ENCODE measurements at regions of chr16 and their contacts with region 1.

Region 1: GRCh38 chr16:68528686-68529379 is 10.3 kb upstream of the ZFP90 start:
- DNase-seq: peak; percentile 79 to 93 (median 88)
- ATAC-seq: peak; percentile 72 to 80
- H3K4me3 Mint-ChIP-seq: peak overlapping the region; percentile 68 to 94 (median 88)
- H3K27ac Mint-ChIP-seq: peak overlapping the region; percentile 54 to 96 (median 85)
- H3K4me1 Mint-ChIP-seq: peaks cover 14 to 23% (median 20%) of the 10 kb centered on the region in 4 donors
- H3K27me3 Mint-ChIP-seq: peaks cover 0 to 2% (median 0%) of the 10 kb centered on the region in 5 donors

Region 2: GRCh38 chr16:68538880-68539701 is 10.3 kb after region 1 on chr16 and contains the start of gene ZFP90:
- POLR2A ChIA-PET with region 1: interaction called, 25 read pairs
- DNase-seq: peak; percentile 70 to 90 (median 82)
- ATAC-seq: peak; percentile 89 to 91
- H3K4me3 Mint-ChIP-seq: peak within 1 kb of the TSS; percentile 91 to 99 (median 98)
- H3K27ac Mint-ChIP-seq: peak within 1 kb of the TSS; percentile 98 to 100 (median 100)
- H3K4me1 Mint-ChIP-seq: peaks cover 13 to 31% (median 19%) of the 10 kb centered on the region in 4 donors
- H3K27me3 Mint-ChIP-seq: no peaks in the 10 kb centered on the region
- polyA plus RNA-seq, gene ZFP90: 25.2 to 29.2 (median 29.1) TPM